WTC11 (cell line): ENCODE measurements at regions of chr15 and their contacts with region 1.

Region 1: DNA sequence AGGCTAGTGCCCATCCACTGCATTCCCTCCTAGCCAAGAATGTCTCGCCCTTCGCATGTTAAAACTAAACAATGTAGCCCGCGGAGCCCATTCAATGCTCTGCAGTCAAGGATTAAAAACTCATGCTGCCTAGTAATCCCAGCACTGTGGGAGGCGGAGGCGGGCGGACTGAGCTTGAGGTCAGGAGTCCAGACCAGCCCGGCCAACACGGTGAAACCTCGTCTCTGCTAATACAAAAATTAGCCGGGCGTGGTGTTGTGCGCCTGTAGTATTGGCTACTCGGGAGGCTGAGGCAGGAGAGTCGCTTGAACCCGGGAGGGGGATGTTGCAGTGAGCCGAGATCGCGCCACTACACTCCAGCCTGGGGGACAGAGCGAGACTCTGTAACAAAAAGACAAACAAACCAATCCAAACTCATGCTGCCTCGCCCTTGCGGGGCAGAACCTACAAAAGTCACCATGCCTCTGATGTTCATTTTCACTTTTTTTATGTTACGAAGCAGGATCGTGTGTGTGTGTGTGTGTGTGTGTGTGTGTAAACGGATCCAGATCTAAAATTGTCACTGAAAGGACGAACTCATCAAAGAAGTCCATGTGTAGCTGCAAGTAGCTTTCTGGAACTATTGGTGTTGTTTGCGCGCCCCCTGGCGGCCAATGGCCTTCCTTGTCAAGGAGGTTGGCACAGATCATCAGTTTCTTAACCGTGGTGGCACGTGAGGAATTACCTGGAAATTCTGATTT is 54.8 kb upstream of the SPESP1 start:
- DNase-seq: peak; percentile 96
- ATAC-seq: peak; percentile 87
- H3K4me3 Mint-ChIP-seq: peak overlapping the region; percentile 76
- H3K27ac Mint-ChIP-seq: no peak overlapping the region
- H3K4me1 Mint-ChIP-seq: peaks cover 9% of the 10 kb centered on the region
- H3K27me3 Mint-ChIP-seq: peaks cover 19% of the 10 kb centered on the region
- CTCF ChIP-seq: peak; percentile 84

Region 2: DNA sequence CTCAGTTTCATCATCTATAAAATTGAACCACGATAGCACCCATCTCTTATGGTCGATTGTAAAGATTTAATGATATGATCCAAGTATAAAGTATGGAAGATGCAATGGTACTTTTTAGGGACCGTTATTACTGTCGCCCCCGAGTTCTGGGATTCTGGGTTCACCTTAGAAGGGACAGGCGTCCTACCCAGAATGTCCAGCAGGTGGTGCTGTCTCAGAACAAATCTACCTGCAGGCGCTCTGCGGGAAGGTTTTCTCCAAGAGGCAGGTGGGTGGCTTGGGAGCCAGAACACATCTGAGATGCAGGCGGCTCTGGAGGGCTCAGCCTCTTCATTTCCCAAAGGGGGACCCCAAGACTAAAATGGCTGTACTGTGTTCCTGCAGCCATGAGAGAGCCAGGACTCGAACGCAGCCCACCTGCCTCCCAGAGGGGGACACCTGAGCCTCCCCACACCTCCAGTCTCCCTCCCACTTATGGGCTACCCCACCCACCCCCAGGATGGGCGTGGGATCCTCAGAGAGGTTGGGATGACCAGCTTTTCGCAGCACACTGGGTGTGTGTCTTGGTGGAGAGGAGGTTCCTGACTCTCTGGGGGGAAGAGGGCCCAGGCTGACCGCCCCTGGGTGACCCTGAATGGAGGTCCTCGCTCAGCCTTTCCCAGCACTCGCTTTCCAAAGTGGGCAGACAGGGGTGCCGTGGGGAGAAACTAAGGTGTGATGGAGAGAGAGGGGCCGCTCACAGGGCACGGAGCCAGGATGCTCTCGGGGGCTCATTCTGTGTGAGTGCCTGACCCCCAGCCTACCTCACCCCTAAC is 324.9 kb before region 1 on chr15:
- CTCF ChIA-PET with region 1: interaction called, 43 read pairs
- POLR2A ChIA-PET with region 1: no interaction called
- DNase-seq: peak; percentile 94
- ATAC-seq: peak; percentile 79
- H3K4me3 Mint-ChIP-seq: no peak overlapping the region
- H3K27ac Mint-ChIP-seq: no peak overlapping the region
- H3K4me1 Mint-ChIP-seq: no peaks in the 10 kb centered on the region
- H3K27me3 Mint-ChIP-seq: peaks cover 10% of the 10 kb centered on the region
- CTCF ChIP-seq: peak; percentile 94

Region 3: DNA sequence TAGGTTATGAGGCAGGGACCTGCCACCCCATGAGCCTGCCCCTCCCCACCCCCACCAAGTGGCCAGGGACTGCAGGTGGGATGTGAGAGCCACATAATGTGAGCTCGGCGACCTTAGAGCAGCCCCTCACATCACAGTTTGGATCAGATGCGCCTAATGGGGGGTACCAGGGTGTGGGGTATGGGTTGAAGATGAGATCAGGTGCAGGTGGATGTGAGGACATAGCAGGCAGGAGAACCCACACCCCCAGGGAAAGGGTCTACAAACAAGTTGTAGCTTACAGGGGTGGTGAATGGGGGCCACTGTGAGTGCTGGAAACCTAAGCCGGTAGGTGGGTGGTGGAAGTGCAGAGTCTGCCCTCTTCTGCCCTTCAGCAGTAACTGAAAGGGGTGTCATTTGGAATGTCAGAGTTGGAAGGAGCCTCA is 202.8 kb before region 1 on chr15:
- CTCF ChIA-PET with region 1: interaction called, 48 read pairs
- POLR2A ChIA-PET with region 1: no interaction called
- DNase-seq: peak; percentile 49
- ATAC-seq: peak; percentile 71
- H3K4me3 Mint-ChIP-seq: no peak overlapping the region
- H3K27ac Mint-ChIP-seq: no peak overlapping the region
- H3K4me1 Mint-ChIP-seq: peaks cover 11% of the 10 kb centered on the region
- H3K27me3 Mint-ChIP-seq: no peaks in the 10 kb centered on the region
- CTCF ChIP-seq: no peak

Region 4: DNA sequence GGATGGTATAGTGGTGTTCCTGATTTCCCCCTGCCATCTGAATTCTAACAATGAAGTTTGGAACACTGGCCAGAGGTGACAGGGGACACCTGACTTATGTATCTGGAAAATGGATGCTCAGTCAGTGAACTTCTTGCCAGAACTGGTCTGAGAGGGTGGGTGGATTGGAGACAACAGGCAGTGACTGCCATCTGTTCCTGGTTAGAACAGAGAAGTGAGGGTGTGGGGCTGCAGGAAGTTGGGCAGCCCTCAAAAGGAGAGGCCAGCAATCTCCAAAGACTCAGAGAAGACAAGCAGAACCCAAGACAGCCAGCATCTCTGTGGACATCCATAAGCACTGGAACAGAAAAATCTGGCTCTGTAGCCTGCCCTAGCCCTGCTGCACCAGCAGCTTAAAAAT is 105.3 kb before region 1 on chr15:
- CTCF ChIA-PET with region 1: interaction called, 11 read pairs
- POLR2A ChIA-PET with region 1: no interaction called
- DNase-seq: no peak
- ATAC-seq: no peak
- H3K4me3 Mint-ChIP-seq: no peak overlapping the region
- H3K27ac Mint-ChIP-seq: no peak overlapping the region
- H3K4me1 Mint-ChIP-seq: peaks cover 4% of the 10 kb centered on the region; the same call in 1 of the 2 replicates
- H3K27me3 Mint-ChIP-seq: peaks cover 11% of the 10 kb centered on the region; the same call in 1 of the 2 replicates
- CTCF ChIP-seq: no peak

Region 5: GRCh38 chr15:68806220-68807060 is 69.1 kb before region 1 on chr15:
- CTCF ChIA-PET with region 1: interaction called, 15 read pairs
- POLR2A ChIA-PET with region 1: no interaction called
- DNase-seq: no peak
- ATAC-seq: no peak
- H3K4me3 Mint-ChIP-seq: no peak overlapping the region
- H3K27ac Mint-ChIP-seq: peak overlapping the region; percentile 77
- H3K4me1 Mint-ChIP-seq: peaks cover 58% of the 10 kb centered on the region
- H3K27me3 Mint-ChIP-seq: no peaks in the 10 kb centered on the region
- CTCF ChIP-seq: no peak

Region 6: GRCh38 chr15:68900027-68900426 is 24.5 kb after region 1 on chr15:
- CTCF ChIA-PET with region 1: interaction called, 10 read pairs
- POLR2A ChIA-PET with region 1: no interaction called
- DNase-seq: no peak
- ATAC-seq: no peak
- H3K4me3 Mint-ChIP-seq: no peak overlapping the region
- H3K27ac Mint-ChIP-seq: no peak overlapping the region
- H3K4me1 Mint-ChIP-seq: 0 out of 2 replicates have a peak, but pooled peaks cover 4% of the 10 kb centered on the region
- H3K27me3 Mint-ChIP-seq: no peaks in the 10 kb centered on the region; the same call in none of the 2 replicates
- CTCF ChIP-seq: no peak

Region 7: GRCh38 chr15:69064649-69065048 is 189.1 kb after region 1 on chr15:
- CTCF ChIA-PET with region 1: no interaction called
- POLR2A ChIA-PET with region 1: no interaction called
- DNase-seq: peak; percentile 45
- ATAC-seq: peak; percentile 48
- H3K4me3 Mint-ChIP-seq: no peak overlapping the region
- H3K27ac Mint-ChIP-seq: no peak overlapping the region
- H3K4me1 Mint-ChIP-seq: peaks cover 18% of the 10 kb centered on the region
- H3K27me3 Mint-ChIP-seq: no peaks in the 10 kb centered on the region; the same call in 1 of the 2 replicates
- CTCF ChIP-seq: no peak